ENCODE measurements at regions of chrX and their contacts with region 1.

Region 1: DNA sequence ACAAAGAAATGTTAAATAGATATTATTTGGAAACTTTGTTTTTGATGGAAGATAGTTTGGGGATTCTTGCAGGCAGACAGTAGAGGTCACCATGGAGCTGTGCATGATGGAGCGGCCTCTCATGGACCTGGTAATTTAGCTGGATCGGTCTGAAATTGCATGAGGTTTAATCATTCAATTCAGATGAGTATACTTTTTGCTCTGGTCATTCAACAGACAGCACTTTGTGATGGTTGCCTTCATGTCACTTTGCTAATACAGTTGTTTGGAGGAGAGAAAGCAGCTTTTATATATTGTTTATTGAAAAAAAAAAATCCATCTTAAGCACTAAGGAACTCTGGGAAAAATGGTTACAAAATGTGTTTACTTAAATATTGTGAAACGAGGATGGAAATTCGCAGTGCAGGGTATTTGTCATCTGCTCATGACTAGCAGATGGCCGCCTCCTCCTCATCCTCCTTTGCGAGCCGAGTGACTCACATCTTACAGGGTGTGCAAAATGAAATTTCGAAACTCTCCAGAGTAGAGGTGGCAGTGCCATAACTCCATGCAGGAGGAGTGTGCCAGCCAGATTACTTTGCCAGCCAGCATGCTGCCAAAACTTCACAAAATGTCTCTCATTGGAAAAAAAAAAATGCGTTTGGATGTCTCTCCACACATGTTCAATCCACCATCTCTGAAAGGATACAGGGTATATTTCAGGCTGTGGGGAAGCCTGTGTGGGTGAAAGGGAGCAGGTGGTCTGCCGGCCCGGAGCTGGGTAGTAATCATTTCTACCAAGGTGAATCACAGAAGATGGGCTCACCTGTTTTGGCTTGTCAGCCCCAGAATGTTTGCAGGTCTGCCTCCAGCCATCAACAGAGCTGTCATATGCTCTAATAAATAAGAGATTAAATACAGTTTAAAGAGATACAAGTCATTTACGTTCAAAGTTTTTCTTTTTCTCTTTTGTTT is 314.9 kb upstream of the DIPK2B start:
- DNase-seq: peak in 4 of 5 donors; percentile 20 to 51 (median 38)
- ATAC-seq: peak; percentile 64 to 90 (median 81)
- H3K4me3 ChIP-seq: peak overlapping the region in 1 of 12 donors; percentile 6
- H3K27ac ChIP-seq: peak overlapping the region in 2 of 12 donors; percentile 14 to 22
- H3K4me1 ChIP-seq: peaks cover 0 to 8% (median 0%) of the 10 kb centered on the region in 12 donors
- H3K27me3 ChIP-seq: peaks cover 0 to 15% (median 0%) of the 10 kb centered on the region in 9 donors
- CTCF ChIP-seq: peak; percentile 40 to 68 (median 56)
- POLR2A ChIP-seq: no peak

Region 2: GRCh38 chrX:45749375-45749774 is 233.8 kb after region 1 on chrX:
- intact Hi-C with region 1: loop called in 9 of 10 experiments (anchors 2 to 10 kb)
- DNase-seq: no peak
- ATAC-seq: peak in 2 of 4 donors; percentile 39 to 55
- H3K4me3 ChIP-seq: peak overlapping the region in 8 of 12 donors; percentile 35 to 49 (median 41)
- H3K27ac ChIP-seq: peak overlapping the region in 11 of 12 donors; percentile 22 to 79 (median 67)
- H3K4me1 ChIP-seq: peaks cover 0 to 23% (median 3%) of the 10 kb centered on the region in 12 donors
- H3K27me3 ChIP-seq: peaks cover 0 to 23% (median 0%) of the 10 kb centered on the region in 9 donors
- CTCF ChIP-seq: peak in 10 of 12 donors; percentile 5 to 48 (median 29)
- POLR2A ChIP-seq: no peak

Region 3: GRCh38 chrX:45781901-45782553 is 266.5 kb after region 1 on chrX:
- intact Hi-C with region 1: loop called in 2 of 10 experiments (anchors 10 kb)
- DNase-seq: no peak
- ATAC-seq: peak in 2 of 4 donors; percentile 47 to 59
- H3K4me3 ChIP-seq: no peak overlapping the region
- H3K27ac ChIP-seq: no peak overlapping the region
- H3K4me1 ChIP-seq: peaks cover 0 to 11% (median 0%) of the 10 kb centered on the region in 12 donors
- H3K27me3 ChIP-seq: peaks cover 0 to 8% (median 0%) of the 10 kb centered on the region in 9 donors
- CTCF ChIP-seq: peak in 7 of 12 donors; percentile 20 to 43 (median 27)
- POLR2A ChIP-seq: no peak

Region 4: DNA sequence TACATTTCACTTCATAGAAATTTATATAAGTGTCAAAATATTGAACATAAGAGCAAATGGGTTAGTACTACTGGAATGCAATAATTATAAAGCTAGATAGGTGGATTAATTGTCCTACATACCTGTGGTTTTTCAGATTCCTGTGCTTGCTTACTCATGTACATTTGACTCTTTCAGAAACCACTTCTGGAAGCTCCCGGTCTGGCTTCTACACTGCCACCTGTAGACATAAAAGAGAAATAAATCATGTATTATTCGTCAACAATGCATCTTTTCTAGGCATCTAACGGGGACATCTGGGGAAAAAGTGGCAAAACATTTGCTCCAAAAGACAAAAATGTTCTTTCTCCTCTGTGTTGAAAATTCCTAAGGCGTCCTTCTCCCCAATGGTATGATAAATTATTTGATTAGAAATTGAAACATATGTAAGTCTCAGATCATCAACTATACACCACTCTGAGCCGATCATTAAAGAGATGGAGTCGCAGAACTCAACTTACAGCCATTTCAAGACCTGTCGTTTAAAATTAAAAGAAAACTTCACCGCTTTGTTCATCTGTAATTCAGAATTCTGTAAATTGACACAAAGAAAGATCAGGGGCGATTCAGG is 333.8 kb after region 1 on chrX:
- intact Hi-C with region 1: loop called in 9 of 10 experiments (anchors 5 to 10 kb)
- DNase-seq: no peak
- ATAC-seq: no peak
- H3K4me3 ChIP-seq: peak overlapping the region in 8 of 12 donors; percentile 1 to 57 (median 15)
- H3K27ac ChIP-seq: no peak overlapping the region
- H3K4me1 ChIP-seq: peaks cover 0 to 6% (median 0%) of the 10 kb centered on the region in 12 donors
- H3K27me3 ChIP-seq: peaks cover 0 to 56% (median 0%) of the 10 kb centered on the region in 9 donors
- CTCF ChIP-seq: peak in 7 of 12 donors; percentile 18 to 45 (median 31)
- POLR2A ChIP-seq: no peak

Region 5: DNA sequence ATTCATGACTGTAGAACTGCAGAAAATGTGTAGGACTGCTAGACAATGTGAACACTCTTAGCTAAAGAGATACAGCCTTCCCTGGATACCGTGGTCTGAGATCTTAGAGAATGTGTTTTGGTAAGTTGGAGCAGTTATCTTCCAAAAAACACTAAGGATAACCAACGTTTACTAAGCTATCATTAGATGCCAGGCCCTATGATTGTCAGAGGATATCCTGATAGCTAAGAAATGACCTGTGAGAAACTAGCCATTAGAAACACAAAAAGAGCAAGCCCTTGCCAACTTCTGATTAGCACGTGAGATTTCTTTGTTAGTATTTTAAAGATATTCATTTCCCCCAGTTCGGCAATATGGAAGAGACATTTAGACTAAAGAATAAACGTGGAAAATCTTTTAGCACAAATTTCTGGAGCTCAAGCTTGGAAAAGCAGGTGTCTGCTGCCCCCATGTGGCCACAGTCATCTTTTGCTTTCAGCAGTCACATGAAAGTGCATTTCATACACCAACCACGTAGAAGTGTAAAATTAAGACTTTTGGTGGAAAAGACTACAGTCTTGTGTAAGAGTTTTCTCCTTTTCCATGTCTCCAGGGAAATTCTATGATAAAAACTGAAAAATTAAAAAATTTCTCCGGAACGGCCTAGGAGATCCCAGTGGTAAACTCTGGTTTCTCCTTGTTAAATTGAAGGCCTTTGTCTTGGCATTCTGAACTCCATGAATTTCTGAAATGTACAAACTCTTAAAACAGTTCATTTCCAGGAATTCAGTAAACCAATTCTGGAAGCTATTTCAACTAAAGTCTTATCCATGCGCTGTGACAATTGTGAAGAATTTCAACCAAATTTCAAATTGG is 893.2 kb after region 1 on chrX:
- intact Hi-C with region 1: loop called in 4 of 10 experiments (anchors 5 to 10 kb)
- DNase-seq: peak; percentile 37 to 74 (median 54)
- ATAC-seq: no peak
- H3K4me3 ChIP-seq: no peak overlapping the region
- H3K27ac ChIP-seq: no peak overlapping the region
- H3K4me1 ChIP-seq: no peaks in the 10 kb centered on the region
- H3K27me3 ChIP-seq: no peaks in the 10 kb centered on the region
- CTCF ChIP-seq: peak; percentile 56 to 92 (median 76)
- POLR2A ChIP-seq: no peak

Measured in heart left ventricle (tissue), 16 donors.